WTC11 (cell line): ENCODE measurements at regions of chr5 and their contacts with region 1.

Region 1: GRCh38 chr5:173293817-173294672 is 34.2 kb downstream of the STC2 start:
- DNase-seq: peak; percentile 85
- ATAC-seq: peak; percentile 67
- H3K4me3 Mint-ChIP-seq: peak overlapping the region; percentile 63
- H3K27ac Mint-ChIP-seq: no peak overlapping the region
- H3K4me1 Mint-ChIP-seq: peaks cover 56% of the 10 kb centered on the region
- H3K27me3 Mint-ChIP-seq: peaks cover 36% of the 10 kb centered on the region
- CTCF ChIP-seq: peak; percentile 94

Region 2: DNA sequence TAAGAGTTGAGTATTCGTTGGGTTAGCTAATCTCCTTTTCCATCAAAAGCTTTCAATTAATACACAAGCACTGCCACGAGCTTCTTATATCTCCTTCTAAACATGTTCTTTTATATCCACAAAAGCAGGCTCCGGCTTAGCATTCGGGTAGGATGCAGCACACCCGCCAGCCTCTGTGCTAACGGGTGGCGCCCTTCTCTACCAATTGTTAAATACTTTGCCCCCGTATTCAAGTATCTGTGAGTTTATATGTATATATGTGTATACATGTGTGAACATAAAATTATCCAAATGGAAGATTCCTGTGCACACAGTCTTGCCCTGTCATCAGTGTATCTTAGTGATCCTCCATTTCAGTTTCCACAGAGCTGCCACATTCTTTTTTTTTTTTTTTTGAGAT is 121.9 kb before region 1 on chr5:
- CTCF ChIA-PET with region 1: no interaction called
- POLR2A ChIA-PET with region 1: no interaction called
- DNase-seq: no peak
- ATAC-seq: 0 out of 2 replicates have a peak, but pooled peaks have one; percentile 38
- H3K4me3 Mint-ChIP-seq: no peak overlapping the region
- H3K27ac Mint-ChIP-seq: no peak overlapping the region
- H3K4me1 Mint-ChIP-seq: peaks cover 8% of the 10 kb centered on the region
- H3K27me3 Mint-ChIP-seq: 0 out of 2 replicates have a peak, but pooled peaks cover 2% of the 10 kb centered on the region
- CTCF ChIP-seq: no peak

Region 3: GRCh38 chr5:173283318-173284288 is 10.4 kb before region 1 on chr5:
- CTCF ChIA-PET with region 1: interaction called, 15 read pairs
- POLR2A ChIA-PET with region 1: no interaction called
- DNase-seq: peak; percentile 87
- ATAC-seq: peak; percentile 88
- H3K4me3 Mint-ChIP-seq: peak overlapping the region; percentile 23; the same call in 1 of the 2 replicates
- H3K27ac Mint-ChIP-seq: no peak overlapping the region
- H3K4me1 Mint-ChIP-seq: peaks cover 10% of the 10 kb centered on the region
- H3K27me3 Mint-ChIP-seq: peaks cover 61% of the 10 kb centered on the region
- CTCF ChIP-seq: peak; percentile 58

Region 4: GRCh38 chr5:173315495-173316350 is 21.7 kb after region 1 on chr5:
- CTCF ChIA-PET with region 1: interaction called, 37 read pairs
- POLR2A ChIA-PET with region 1: interaction called, 12 read pairs
- DNase-seq: no peak
- ATAC-seq: peak; percentile 50
- H3K4me3 Mint-ChIP-seq: no peak overlapping the region
- H3K27ac Mint-ChIP-seq: peak overlapping the region; percentile 91
- H3K4me1 Mint-ChIP-seq: peaks cover 42% of the 10 kb centered on the region
- H3K27me3 Mint-ChIP-seq: peaks cover 16% of the 10 kb centered on the region
- CTCF ChIP-seq: no peak

Region 5: DNA sequence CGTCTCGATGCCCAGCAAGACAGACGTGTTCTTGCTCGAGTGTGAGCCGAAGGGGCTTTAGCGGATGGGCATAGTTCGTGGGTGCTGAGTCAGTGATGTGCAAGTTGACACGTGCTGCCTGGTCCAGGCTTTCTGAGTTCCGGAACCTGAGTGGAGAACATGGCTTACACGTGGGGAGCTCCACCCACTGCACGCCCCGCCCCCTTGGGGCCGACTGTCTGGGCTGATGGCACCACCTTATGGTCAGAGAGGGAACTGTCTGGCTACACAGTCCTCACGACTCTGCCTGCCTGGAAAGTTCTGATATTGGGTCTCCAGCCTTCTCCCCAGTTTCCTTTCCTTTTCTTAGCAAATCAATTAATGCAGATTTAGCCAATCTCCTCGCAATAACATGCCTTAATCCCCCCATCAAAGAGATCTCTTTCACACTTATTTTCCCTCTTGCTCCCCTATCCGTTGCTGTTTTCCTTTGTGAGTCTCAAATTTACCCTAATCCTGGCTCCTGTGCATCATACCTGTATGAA is 38.0 kb after region 1 on chr5:
- CTCF ChIA-PET with region 1: interaction called, 169 read pairs
- POLR2A ChIA-PET with region 1: interaction called, 55 read pairs
- DNase-seq: peak; percentile 89
- ATAC-seq: peak; percentile 31
- H3K4me3 Mint-ChIP-seq: no peak overlapping the region
- H3K27ac Mint-ChIP-seq: no peak overlapping the region
- H3K4me1 Mint-ChIP-seq: peaks cover 27% of the 10 kb centered on the region
- H3K27me3 Mint-ChIP-seq: peaks cover 8% of the 10 kb centered on the region
- CTCF ChIP-seq: peak; percentile 79

Region 6: DNA sequence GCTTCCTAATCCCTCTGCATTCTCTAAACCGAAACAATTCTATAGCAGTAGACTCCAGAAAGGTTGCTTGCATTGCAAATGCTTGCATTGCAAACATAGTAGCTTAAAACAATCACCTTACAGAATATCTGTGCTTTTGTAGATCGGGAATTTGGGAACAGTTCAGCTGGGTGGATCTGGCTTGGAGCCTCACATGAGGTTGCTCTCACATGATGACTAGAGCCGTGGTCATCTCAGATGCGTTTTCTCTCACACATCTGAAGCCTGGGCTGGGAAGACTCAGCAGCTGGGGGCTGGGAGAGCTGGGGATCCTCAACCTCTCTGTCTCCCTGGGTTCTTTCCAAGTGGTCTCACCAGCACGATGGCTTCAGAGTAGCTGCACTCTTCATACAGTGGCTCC is 1558.1 kb after region 1 on chr5:
- CTCF ChIA-PET with region 1: no interaction called
- POLR2A ChIA-PET with region 1: no interaction called
- DNase-seq: no peak
- ATAC-seq: no peak
- H3K4me3 Mint-ChIP-seq: no peak overlapping the region
- H3K27ac Mint-ChIP-seq: no peak overlapping the region
- H3K4me1 Mint-ChIP-seq: peaks cover 10% of the 10 kb centered on the region
- H3K27me3 Mint-ChIP-seq: peaks cover 5% of the 10 kb centered on the region
- CTCF ChIP-seq: no peak